ENCODE measurements at regions of chr4 and their contacts with region 1.

Region 1: GRCh38 chr4:147916351-147916750 is 184.5 kb downstream of the ARHGAP10 start:
- DNase-seq: no peak
- H3K4me3 ChIP-seq: no peak overlapping the region
- H3K27ac ChIP-seq: no peak overlapping the region
- H3K4me1 ChIP-seq: no peaks in the 10 kb centered on the region
- H3K27me3 ChIP-seq: no peaks in the 10 kb centered on the region
- CTCF ChIP-seq: no peak
- EP300 ChIP-seq: no peak
- POLR2A ChIP-seq: no peak
- RAD21 ChIP-seq: no peak

Region 2: GRCh38 chr4:147899512-147899911 is 16.8 kb before region 1 on chr4:
- CTCF ChIA-PET with region 1: no interaction called
- POLR2A ChIA-PET with region 1: no interaction called
- DNase-seq: no peak
- H3K4me3 ChIP-seq: no peak overlapping the region
- H3K27ac ChIP-seq: no peak overlapping the region
- H3K4me1 ChIP-seq: no peaks in the 10 kb centered on the region
- H3K27me3 ChIP-seq: no peaks in the 10 kb centered on the region
- CTCF ChIP-seq: no peak
- EP300 ChIP-seq: no peak
- POLR2A ChIP-seq: no peak
- RAD21 ChIP-seq: no peak

Region 3: DNA sequence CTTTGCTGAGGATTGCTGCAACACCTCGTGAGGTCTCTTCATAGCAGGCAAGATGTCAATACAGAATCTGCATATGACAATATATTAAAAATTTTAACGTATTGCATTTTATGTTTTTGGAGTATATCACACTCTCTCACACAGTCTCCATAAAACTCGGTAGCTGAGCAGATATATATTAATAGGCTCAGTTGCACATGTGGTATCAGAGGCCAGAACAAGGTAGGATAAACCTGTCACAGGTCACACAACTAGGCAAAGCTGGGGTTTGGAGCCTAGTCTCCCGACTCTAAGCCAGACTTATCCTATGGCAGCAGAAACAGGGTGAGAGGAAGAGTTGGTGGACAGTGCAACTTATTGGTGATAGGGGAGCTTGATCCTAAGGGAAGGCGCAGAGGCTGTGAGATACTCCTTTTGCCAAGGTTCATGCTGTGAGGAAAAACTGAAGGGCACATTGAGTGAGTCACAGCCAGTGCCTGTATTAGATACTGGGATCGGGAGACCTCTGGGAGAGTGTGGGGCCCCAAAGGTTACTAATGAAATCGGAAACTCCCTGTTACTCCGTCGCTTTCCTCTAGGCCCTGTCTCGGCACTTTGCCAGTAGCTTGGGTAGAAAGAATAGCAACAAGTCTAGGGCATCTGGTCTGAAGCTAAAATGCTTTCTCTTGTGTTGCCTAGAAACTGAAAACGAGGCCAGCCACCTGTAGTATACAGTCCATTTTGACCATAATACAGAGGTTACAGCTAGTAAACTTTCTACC is 11.2 kb after region 1 on chr4:
- CTCF ChIA-PET with region 1: interaction called, 12 read pairs
- POLR2A ChIA-PET with region 1: no interaction called
- DNase-seq: no peak
- H3K4me3 ChIP-seq: no peak overlapping the region
- H3K27ac ChIP-seq: no peak overlapping the region
- H3K4me1 ChIP-seq: peaks cover 0 to 10% (median 5%) of the 10 kb centered on the region in 4 experiments; a peak in 6 of 7 replicates
- H3K27me3 ChIP-seq: no peaks in the 10 kb centered on the region
- CTCF ChIP-seq: no peak
- EP300 ChIP-seq: no peak
- POLR2A ChIP-seq: no peak
- RAD21 ChIP-seq: no peak